ENCODE measurements at regions of chr11 and their contacts with region 1.

Region 1: GRCh38 chr11:104570078-104570701 is 328.1 kb downstream of the CASP12 start:
- DNase-seq: peak; percentile 10 to 68
- H3K4me3 ChIP-seq: no peak overlapping the region
- H3K27ac ChIP-seq: no peak overlapping the region
- H3K4me1 ChIP-seq: peaks cover 17% of the 10 kb centered on the region
- H3K27me3 ChIP-seq: no peaks in the 10 kb centered on the region
- CTCF ChIP-seq: no peak

Region 2: DNA sequence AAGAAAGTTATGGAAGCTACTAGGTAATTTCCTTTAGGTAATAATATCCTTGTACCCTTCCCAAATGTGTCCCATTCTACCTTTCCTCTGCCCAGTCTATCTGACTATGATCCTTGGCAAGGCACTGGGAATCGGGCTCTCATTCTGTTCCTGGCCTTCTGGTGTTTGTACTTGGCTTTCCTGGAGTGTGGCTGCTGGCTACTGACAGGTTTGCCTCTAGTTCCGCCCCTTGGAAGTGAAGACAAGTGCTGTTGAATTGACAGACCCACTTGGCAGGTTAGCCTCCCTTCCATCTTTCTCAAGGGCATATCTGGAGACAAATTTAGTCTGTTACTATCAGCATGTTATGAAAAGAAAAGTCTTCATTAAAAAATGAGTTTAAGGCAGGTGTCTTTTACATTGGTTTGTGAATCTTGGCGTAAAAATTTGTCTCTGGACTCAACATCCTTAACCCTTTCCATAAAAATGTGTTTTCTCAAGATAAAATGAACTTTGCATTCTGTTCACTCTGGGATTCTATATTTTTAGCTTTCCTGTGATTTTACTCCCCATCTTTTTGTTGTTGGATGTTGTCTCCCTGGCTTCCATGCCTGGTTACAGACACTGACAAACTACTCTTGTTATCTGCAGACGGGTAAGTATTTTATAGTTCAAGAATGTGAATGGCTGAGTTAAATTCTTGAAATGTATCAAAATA is 118.8 kb before region 1 on chr11:
- CTCF ChIA-PET with region 1: no interaction called
- POLR2A ChIA-PET with region 1: no interaction called
- intact Hi-C with region 1: loop called (anchors 1 kb)
- DNase-seq: no peak
- H3K4me3 ChIP-seq: peak overlapping the region; percentile 30; the same call in 1 of the 2 replicates
- H3K27ac ChIP-seq: peak overlapping the region; percentile 91
- H3K4me1 ChIP-seq: peaks cover 46% of the 10 kb centered on the region
- H3K27me3 ChIP-seq: no peaks in the 10 kb centered on the region
- CTCF ChIP-seq: no peak

Measured in PC-9 (cell line).